HCT116 (cell line): ENCODE measurements at regions of chr7 and their contacts with region 1.

Region 1: DNA sequence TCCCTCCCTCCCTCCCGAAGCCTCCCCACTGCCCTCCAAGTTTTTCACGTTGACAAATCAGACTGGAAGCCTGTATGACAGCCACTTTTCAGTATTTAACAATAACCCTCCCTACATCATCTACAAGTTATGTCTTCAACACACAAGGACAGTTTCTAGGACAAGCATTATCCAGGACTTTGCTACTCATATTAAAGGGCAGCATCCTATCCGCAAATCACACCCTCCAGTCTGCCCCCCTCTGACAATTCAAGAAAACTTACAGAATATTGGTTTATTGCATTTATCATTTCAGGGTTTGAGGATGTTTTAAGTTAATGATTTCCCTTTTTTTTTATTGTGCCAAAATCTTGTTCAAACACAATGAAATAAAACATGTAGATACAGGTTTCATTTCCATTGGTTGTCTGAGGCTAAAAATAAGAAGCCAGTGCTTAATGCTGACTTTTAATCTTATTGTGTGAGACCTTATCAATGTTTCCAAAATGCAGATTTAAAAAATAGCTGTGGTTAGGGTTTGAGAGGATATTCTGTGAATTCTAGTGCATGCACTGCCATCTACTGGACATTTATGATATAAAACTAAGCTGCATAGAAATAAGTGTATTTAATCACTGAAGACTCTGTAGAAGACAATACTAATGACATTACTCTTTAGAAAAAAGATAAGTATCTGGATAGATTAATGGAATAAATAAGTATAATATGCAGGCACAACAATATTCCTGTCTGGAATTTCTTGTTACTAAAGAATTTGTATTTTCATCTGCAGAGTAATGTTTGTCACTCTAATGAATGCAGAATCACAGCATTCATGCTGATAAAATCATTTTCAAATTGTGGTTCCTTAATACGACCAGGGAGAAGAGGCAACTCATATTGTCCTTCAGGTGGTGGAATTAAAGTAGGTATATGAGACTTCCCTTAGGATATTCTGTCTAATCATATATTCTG is 64.1 kb downstream of the CAV1 start:
- DNase-seq: peak; percentile 44
- ATAC-seq: peak; percentile 60
- H3K4me3 ChIP-seq: no peak overlapping the region
- H3K27ac ChIP-seq: peak overlapping the region; percentile 44; the same call in 1 of the 2 replicates
- H3K4me1 ChIP-seq: peaks cover 10 to 37% of the 10 kb centered on the region in 2 experiments; a peak in 3 of 4 replicates
- H3K27me3 ChIP-seq: no peaks in the 10 kb centered on the region
- CTCF ChIP-seq: peak; percentile 42 to 88 (median 70)
- POLR2A ChIP-seq: no peak
- RAD21 ChIP-seq: peak; percentile 93

Region 2: GRCh38 chr7:116180302-116180701 is 408.6 kb before region 1 on chr7:
- CTCF ChIA-PET with region 1: interaction called, 94 read pairs
- POLR2A ChIA-PET with region 1: no interaction called
- RAD21 ChIA-PET with region 1: interaction called, 4 to 9 read pairs
- intact Hi-C with region 1: loop called (anchors 1 kb)
- DNase-seq: peak; percentile 43
- ATAC-seq: peak; percentile 85
- H3K4me3 ChIP-seq: no peak overlapping the region
- H3K27ac ChIP-seq: no peak overlapping the region
- H3K4me1 ChIP-seq: no peaks in the 10 kb centered on the region
- H3K27me3 ChIP-seq: no peaks in the 10 kb centered on the region
- CTCF ChIP-seq: peak; percentile 76 to 89 (median 83)
- POLR2A ChIP-seq: no peak
- RAD21 ChIP-seq: peak; percentile 94

Region 3: GRCh38 chr7:116354546-116355408 is 234.1 kb before region 1 on chr7:
- CTCF ChIA-PET with region 1: no interaction called
- POLR2A ChIA-PET with region 1: no interaction called
- RAD21 ChIA-PET with region 1: no interaction called
- intact Hi-C with region 1: loop called (anchors 10 kb)
- DNase-seq: peak; percentile 96
- ATAC-seq: peak; percentile 75
- H3K4me3 ChIP-seq: peak overlapping the region; percentile 15 to 41
- H3K27ac ChIP-seq: peak overlapping the region; percentile 89
- H3K4me1 ChIP-seq: peaks cover 61 to 66% of the 10 kb centered on the region in 2 experiments
- H3K27me3 ChIP-seq: no peaks in the 10 kb centered on the region
- CTCF ChIP-seq: no peak
- POLR2A ChIP-seq: no peak
- RAD21 ChIP-seq: 0 out of 2 replicates have a peak, but pooled peaks have one; percentile 11

Region 4: GRCh38 chr7:116511552-116512519 is 77.1 kb before region 1 on chr7:
- CTCF ChIA-PET with region 1: no interaction called
- POLR2A ChIA-PET with region 1: no interaction called
- RAD21 ChIA-PET with region 1: no interaction called
- intact Hi-C with region 1: no loop called
- DNase-seq: peak; percentile 85
- ATAC-seq: peak; percentile 71
- H3K4me3 ChIP-seq: peak overlapping the region; percentile 41 to 48
- H3K27ac ChIP-seq: peak overlapping the region; percentile 96
- H3K4me1 ChIP-seq: peaks cover 51 to 78% of the 10 kb centered on the region in 2 experiments
- H3K27me3 ChIP-seq: no peaks in the 10 kb centered on the region
- CTCF ChIP-seq: no peak
- POLR2A ChIP-seq: no peak
- RAD21 ChIP-seq: no peak

Region 5: GRCh38 chr7:116802746-116803152 is 213.8 kb after region 1 on chr7:
- CTCF ChIA-PET with region 1: interaction called, 31 read pairs
- POLR2A ChIA-PET with region 1: interaction called, 4 read pairs
- RAD21 ChIA-PET with region 1: interaction called in 1 of 2 experiments, 12 read pairs
- intact Hi-C with region 1: no loop called
- DNase-seq: peak; percentile 63
- ATAC-seq: peak; percentile 24
- H3K4me3 ChIP-seq: peak overlapping the region in 1 of 2 experiments; percentile 48; a peak in 2 of 4 replicates
- H3K27ac ChIP-seq: peak overlapping the region; percentile 90
- H3K4me1 ChIP-seq: peaks cover 71 to 81% of the 10 kb centered on the region in 2 experiments
- H3K27me3 ChIP-seq: no peaks in the 10 kb centered on the region
- CTCF ChIP-seq: peak; percentile 37 to 65 (median 39); a peak in 4 of 6 replicates
- POLR2A ChIP-seq: no peak
- RAD21 ChIP-seq: peak; percentile 71